ENCODE measurements at regions of chr2 and their contacts with region 1.

Region 1: GRCh38 chr2:227655454-227655853 is 11.2 kb upstream of the SCYGR5 start:
- DNase-seq: peak; percentile 19
- ATAC-seq: peak; percentile 52; the same call in 1 of the 2 replicates
- H3K4me3 ChIP-seq: no peak overlapping the region
- H3K27ac ChIP-seq: no peak overlapping the region
- H3K4me1 ChIP-seq: peaks cover 0 to 6% of the 10 kb centered on the region in 2 experiments; a peak in 2 of 4 replicates
- H3K27me3 ChIP-seq: no peaks in the 10 kb centered on the region
- CTCF ChIP-seq: no peak
- POLR2A ChIP-seq: no peak
- RAD21 ChIP-seq: no peak

Region 2: DNA sequence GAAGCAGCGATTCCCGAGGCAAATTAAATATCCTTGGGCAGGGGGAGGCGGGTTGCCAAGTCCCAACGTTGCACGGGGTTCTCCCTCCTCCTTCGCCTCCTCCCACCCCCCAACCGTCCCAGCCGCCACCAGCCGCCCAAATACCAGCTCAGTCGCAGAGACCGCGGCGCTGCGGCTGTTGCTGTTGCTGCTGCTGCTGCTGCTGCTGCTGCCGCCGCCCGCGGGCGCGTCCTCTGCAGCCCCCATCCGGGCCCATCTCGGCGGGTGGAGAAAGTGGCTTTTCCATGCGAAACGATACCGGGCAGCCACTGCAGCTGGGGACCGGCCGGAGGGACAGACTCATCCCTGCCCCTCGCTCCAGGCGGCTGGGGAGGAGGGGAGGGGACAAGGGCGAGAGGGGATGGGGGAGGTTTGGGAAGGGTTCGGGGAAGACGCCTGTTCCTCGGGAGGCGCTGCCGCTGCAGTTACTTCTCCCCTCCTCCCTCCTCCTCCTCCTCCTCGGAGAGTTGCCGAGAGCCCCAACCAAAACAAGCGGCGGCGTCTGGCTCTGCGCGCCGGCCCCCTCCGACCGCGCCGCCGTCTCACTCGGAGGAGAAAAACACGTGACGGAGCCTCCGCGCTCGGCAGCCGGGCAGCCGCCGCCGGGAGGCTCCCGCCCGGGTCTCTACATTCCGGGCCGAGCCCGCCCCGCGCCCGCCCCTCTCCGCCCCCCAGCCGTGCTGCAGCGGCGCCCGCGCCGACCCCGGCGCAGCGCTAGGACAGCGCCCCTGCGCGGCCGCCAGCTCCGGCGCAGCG is 856.1 kb before region 1 on chr2 and contains the start of gene IRS1:
- CTCF ChIA-PET with region 1: no interaction called
- POLR2A ChIA-PET with region 1: no interaction called
- RAD21 ChIA-PET with region 1: no interaction called
- intact Hi-C with region 1: no loop called
- DNase-seq: peak; percentile 32
- ATAC-seq: peak; percentile 71
- H3K4me3 ChIP-seq: peak within 1 kb of the TSS; percentile 55 to 71
- H3K27ac ChIP-seq: peak within 1 kb of the TSS; percentile 88
- H3K4me1 ChIP-seq: peaks cover 31 to 89% of the 10 kb centered on the region in 2 experiments; a peak in 3 of 4 replicates
- H3K27me3 ChIP-seq: no peaks in the 10 kb centered on the region
- CTCF ChIP-seq: peak in 1 of 3 experiments; percentile 26; a peak in 3 of 6 replicates
- POLR2A ChIP-seq: no peak
- RAD21 ChIP-seq: no peak
- total RNA-seq, gene IRS1: 88.8 TPM

Region 3: GRCh38 chr2:227479865-227480475 is 175.5 kb before region 1 on chr2:
- CTCF ChIA-PET with region 1: interaction called, 6 read pairs
- POLR2A ChIA-PET with region 1: no interaction called
- RAD21 ChIA-PET with region 1: no interaction called
- intact Hi-C with region 1: loop called (anchors 5 kb)
- DNase-seq: no peak
- ATAC-seq: peak; percentile 72
- H3K4me3 ChIP-seq: no peak overlapping the region
- H3K27ac ChIP-seq: no peak overlapping the region
- H3K4me1 ChIP-seq: peaks cover 0 to 3% of the 10 kb centered on the region in 2 experiments; a peak in 2 of 4 replicates
- H3K27me3 ChIP-seq: no peaks in the 10 kb centered on the region
- CTCF ChIP-seq: peak; percentile 19 to 65 (median 37); a peak in 4 of 6 replicates
- POLR2A ChIP-seq: no peak
- RAD21 ChIP-seq: peak; percentile 73

Region 4: DNA sequence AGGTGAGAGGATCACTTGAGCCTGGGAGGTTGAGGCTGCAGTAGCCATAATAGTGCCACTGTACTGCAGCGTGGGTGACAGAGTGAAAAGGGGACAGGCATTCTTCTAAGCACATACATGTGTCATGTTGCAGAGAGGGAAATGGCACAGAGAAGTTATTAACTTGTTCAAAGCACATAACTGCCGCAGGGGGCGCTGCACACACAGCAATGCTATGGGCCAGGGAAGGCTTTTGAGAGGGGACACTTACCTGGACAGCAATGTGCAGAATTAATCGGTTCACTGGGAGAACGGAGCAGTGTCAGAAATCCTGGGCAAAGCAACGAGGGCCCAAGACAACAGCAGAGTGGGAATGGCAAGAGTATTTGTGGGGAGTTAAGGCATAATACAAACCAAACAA is 92.6 kb after region 1 on chr2:
- CTCF ChIA-PET with region 1: no interaction called
- POLR2A ChIA-PET with region 1: no interaction called
- RAD21 ChIA-PET with region 1: no interaction called
- intact Hi-C with region 1: loop called (anchors 5 kb)
- DNase-seq: peak; percentile 54
- ATAC-seq: peak; percentile 98
- H3K4me3 ChIP-seq: no peak overlapping the region
- H3K27ac ChIP-seq: no peak overlapping the region
- H3K4me1 ChIP-seq: no peaks in the 10 kb centered on the region
- H3K27me3 ChIP-seq: no peaks in the 10 kb centered on the region
- CTCF ChIP-seq: peak; percentile 54 to 94 (median 90); a peak in 5 of 6 replicates
- POLR2A ChIP-seq: no peak
- RAD21 ChIP-seq: peak; percentile 67

Region 5: DNA sequence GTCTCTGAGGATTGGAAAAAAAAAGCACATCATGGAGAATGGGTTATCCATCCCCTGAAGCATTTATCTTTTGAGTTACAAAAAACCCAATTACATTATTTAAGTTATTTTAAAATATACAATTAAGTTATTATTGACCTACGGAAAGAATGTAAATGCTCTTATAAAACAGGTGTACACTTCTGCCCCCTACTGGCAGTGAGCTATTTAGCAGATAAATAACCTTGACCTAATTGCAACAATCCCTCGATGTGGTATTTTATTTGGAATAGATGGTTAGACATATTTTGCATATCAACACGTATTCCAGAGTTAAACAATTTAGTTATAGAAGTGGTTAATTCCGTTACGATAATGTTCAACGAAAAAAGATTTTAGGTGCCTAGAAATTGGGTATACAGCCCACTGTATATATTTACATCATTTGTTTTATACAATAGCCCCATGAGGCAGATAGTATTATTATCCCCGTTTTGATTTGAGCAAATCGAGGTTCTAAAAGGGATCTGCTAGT is 206.8 kb after region 1 on chr2:
- CTCF ChIA-PET with region 1: interaction called, 12 read pairs
- POLR2A ChIA-PET with region 1: no interaction called
- RAD21 ChIA-PET with region 1: no interaction called
- intact Hi-C with region 1: loop called (anchors 5 kb)
- DNase-seq: peak; percentile 51
- ATAC-seq: no peak
- H3K4me3 ChIP-seq: peak overlapping the region in 1 of 2 experiments; percentile 42; a peak in 2 of 4 replicates
- H3K27ac ChIP-seq: peak overlapping the region; percentile 64
- H3K4me1 ChIP-seq: peaks cover 14 to 28% of the 10 kb centered on the region in 2 experiments
- H3K27me3 ChIP-seq: no peaks in the 10 kb centered on the region
- CTCF ChIP-seq: peak; percentile 68 to 84 (median 70); a peak in 5 of 6 replicates
- POLR2A ChIP-seq: no peak
- RAD21 ChIP-seq: peak; percentile 77

Region 6: GRCh38 chr2:228657807-228658402 is 1002.5 kb after region 1 on chr2:
- CTCF ChIA-PET with region 1: no interaction called
- POLR2A ChIA-PET with region 1: no interaction called
- RAD21 ChIA-PET with region 1: no interaction called
- intact Hi-C with region 1: loop called (anchors 10 kb)
- DNase-seq: peak; percentile 24
- ATAC-seq: peak; percentile 68; the same call in 1 of the 2 replicates
- H3K4me3 ChIP-seq: no peak overlapping the region
- H3K27ac ChIP-seq: no peak overlapping the region
- H3K4me1 ChIP-seq: no peaks in the 10 kb centered on the region
- H3K27me3 ChIP-seq: no peaks in the 10 kb centered on the region
- CTCF ChIP-seq: peak; percentile 31 to 78 (median 57); a peak in 5 of 6 replicates
- POLR2A ChIP-seq: no peak
- RAD21 ChIP-seq: peak; percentile 91